Motor neuron (in vitro differentiated cells): ENCODE measurements at regions of chr17 and their contacts with region 1.

Region 1: DNA sequence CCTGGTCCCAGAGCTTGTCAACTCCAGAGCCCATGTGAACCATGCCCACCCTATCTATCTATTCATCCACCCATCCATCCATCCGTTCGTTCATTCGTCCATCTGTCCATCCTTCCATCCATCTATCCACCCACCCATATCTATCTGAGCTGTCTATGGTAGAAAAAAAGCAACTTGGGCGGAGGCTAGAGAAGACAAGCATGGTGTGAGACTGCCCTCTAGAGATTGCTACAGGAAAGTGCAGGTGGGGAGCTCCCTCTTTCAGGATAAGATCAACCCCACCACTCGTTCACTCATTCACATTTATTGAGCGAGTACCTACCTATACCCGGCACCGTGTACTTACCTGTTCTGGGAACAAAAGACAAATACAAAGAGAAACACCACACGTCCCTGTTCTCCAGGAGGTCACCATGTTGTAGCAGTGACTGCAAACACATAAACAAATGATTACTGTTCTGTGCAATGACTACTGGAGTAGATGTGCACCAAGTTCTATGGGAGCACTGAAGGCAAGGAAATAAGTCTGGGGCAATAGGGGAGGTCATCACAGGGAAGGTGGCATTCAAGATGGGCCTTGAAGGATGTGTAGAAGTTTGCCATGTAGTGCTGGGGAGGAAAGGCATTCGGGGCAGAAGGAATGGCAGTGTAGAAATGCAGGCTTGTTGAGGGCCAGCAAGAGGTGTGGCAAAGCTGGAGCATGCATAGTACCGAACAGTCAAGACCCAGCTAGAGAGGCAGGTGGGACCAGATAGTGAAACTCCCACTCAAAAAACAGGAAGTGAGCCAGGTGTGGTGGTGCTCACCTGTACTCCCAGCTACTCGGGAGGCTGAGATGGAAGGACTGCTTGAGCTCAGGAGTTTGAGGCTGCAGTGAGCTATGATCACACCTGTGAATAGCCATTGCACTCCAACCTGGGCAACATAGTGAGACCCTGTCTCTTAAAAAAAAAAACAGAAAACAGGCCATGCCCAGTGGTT is 13.4 kb upstream of the ATP5MC1 start:
- ATAC-seq: peak; percentile 80 to 90 (median 82)
- H3K4me3 ChIP-seq: no peak overlapping the region
- H3K27ac ChIP-seq: no peak overlapping the region
- H3K4me1 ChIP-seq: peaks cover 0 to 2% of the 10 kb centered on the region in 2 donors

Region 2: GRCh38 chr17:48671697-48672171 is 207.5 kb before region 1 on chr17:
- in situ Hi-C with region 1: loop called in 4 of 9 experiments (anchors 25 kb)
- ATAC-seq: peak; percentile 64 to 87 (median 72)
- H3K4me3 ChIP-seq: no peak overlapping the region
- H3K27ac ChIP-seq: no peak overlapping the region
- H3K4me1 ChIP-seq: no peaks in the 10 kb centered on the region

Region 3: DNA sequence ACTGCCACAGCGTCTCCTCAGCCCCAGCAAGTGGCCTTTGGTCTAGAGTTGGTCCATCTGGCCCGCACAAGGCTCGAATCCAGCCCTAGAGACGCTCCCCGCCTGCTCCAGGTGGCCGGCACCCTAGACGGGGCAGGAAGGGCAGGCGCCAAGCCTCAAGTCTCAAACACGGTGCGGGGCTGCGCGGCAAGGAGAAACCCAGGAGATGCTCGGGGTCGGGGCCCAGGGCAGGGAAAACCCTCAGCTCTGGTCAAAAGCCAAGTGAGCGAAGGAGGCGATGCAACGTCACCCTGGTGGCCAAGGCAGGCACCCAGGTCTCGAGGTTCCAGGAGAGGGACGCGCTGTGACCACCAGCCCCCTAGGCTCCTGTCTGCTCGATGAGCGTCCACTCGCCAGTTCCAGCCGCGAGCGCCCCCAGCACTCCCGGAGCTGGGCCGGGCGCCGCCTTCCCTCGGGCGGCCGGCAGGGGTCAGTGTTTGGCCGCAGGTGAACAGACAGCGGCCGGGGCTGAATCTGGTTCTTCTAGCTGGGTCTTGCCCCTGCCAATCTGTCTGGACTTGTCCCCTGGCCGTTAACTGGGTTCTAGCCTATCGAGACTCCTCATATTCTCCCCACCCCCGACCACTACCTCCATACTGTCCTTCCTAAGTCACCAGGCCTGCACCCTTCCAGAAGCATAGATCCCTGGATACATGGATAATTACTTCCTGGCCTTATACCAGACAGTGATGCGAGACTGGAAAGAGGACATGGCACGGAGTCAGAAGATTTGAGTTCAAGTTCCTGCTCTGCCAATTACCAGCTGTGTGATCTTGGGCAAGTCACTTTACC is 200.9 kb before region 1 on chr17:
- in situ Hi-C with region 1: loop called in 4 of 9 experiments (anchors 25 kb)
- ATAC-seq: peak; percentile 58 to 99 (median 84)
- H3K4me3 ChIP-seq: no peak overlapping the region
- H3K27ac ChIP-seq: no peak overlapping the region
- H3K4me1 ChIP-seq: no peaks in the 10 kb centered on the region

Region 4: DNA sequence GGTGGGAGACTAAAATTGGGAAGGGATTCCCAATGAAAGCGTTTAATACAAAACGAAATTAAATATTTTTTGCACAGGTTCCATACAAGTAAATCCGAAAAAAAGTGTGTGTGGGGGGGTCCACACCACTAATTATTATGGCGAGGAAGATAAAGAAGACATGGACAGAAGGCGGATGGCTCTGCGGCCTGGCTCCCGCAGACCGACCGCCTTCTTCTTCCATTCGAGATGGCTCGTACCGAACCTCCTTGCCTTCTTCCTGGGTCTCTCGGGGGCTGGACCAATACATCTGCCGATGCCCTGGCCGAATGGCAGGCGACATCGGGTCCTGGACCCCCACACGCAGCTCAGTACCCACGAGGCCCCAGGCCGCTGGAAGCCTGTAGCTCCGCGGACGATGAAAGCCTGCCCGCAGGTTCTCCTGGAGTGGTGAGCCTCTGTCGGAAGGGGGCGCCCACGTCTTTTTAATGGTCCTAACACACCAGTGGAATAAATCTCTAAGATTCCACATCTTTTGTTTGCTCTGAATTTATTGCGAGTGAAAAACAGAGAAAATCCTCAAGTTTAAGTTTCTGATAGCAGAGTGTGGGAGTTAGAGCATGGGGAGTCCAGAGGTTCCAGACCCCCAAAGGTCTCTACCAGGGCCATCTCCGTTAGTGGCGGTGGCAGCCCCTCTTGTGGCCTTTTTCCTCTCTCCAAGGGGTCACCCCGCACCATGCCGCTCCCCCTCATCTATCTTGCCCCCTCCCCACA is 154.8 kb before region 1 on chr17:
- in situ Hi-C with region 1: loop called in 2 of 9 experiments (anchors 25 kb)
- ATAC-seq: peak; percentile 84 to 92 (median 90)
- H3K4me3 ChIP-seq: no peak overlapping the region
- H3K27ac ChIP-seq: no peak overlapping the region
- H3K4me1 ChIP-seq: peaks cover 0 to 7% of the 10 kb centered on the region in 2 donors

Region 5: DNA sequence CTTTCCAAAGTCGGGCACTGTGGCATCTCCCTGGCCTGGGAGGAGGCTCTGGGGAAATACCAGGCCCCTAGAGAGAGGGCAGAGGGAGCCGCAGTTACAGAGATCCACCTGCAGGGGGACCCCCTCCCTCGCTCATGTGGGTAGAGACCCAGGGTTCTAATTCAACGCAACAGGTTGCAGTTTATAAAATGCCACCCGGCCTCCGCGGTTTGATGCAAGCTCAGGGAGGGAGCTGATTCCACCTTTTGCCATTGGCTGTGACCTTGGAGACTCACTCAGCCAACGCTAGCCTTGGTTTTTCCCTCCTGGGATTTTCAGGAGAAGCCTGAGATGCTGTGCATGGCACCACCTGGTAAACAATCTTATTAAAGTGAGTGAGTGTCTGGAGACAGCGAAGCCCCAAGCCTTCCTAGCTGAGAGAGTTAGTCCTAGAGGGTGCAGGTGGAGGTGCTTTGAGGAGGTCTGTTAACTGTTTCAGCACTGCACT is 74.2 kb before region 1 on chr17:
- in situ Hi-C with region 1: loop called in 3 of 9 experiments (anchors 5 to 10 kb)
- ATAC-seq: peak; percentile 91 to 99 (median 95)
- H3K4me3 ChIP-seq: no peak overlapping the region
- H3K27ac ChIP-seq: no peak overlapping the region
- H3K4me1 ChIP-seq: peaks cover 0 to 3% of the 10 kb centered on the region in 2 donors

Region 6: DNA sequence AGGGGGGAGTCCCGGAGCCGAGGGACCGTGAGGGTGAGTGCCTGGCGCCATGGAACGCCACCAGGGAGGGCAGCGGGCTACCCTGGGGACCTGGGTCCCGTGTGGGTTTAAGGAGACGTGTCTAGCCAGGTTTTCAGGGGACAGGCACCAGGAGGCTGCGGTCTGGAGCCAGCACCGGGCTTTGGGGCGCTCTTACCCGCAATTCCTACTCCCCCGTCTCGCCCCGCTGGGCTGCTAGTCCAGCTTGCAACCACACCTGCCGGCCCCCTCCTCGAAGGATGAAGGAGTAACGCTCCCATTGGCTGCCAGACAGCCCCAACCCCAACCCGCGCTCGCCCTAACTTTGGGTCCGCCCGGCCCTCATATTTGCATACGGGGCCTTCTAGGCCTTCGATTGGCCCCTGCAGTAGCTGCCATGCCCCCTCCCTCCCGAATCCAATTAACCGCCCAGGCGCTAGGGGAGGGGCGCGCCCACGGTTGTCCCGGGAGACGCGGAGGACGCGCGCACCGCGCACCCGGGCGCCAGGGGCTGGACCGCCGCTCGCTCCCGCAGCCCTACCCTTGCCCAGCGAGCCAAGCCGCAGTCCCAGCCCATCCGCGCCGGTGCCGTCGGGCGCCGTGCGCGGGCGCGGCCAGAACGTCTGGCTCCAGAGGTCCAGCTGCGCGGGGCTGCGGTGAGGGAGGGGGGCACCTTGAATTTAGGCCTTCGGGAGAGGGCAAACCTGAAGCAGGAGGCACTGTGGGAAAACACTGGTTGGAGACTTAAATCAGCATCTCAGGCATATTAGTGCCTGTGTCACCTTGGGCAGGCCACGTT is 62.2 kb before region 1 on chr17 and contains the start of gene TTLL6:
- in situ Hi-C with region 1: loop called in 2 of 9 experiments (anchors 5 to 10 kb)
- ATAC-seq: peak; percentile 70 to 98 (median 83)
- H3K4me3 ChIP-seq: peak within 1 kb of the TSS; percentile 24 to 44 (median 36)
- H3K27ac ChIP-seq: peak within 1 kb of the TSS; percentile 65 to 76
- H3K4me1 ChIP-seq: peaks cover 20 to 21% of the 10 kb centered on the region in 2 donors
- total RNA-seq, gene TTLL6: 0.36 to 3.9 (median 1.1) TPM in 6 of 8 experiments, not detected in the others